Activated B cell treated with CpG ODN at 0.5 μM for 24 hours (primary cell): ENCODE measurements at regions of chr9 and their contacts with region 1.

Region 1: GRCh38 chr9:126985870-126986498 is 71.4 kb downstream of the RALGPS1 start:
- DNase-seq: peak; percentile 36
- ATAC-seq: peak; percentile 96
- H3K4me3 Mint-ChIP-seq: peak overlapping the region; percentile 66
- H3K27ac Mint-ChIP-seq: peak overlapping the region; percentile 59
- H3K4me1 Mint-ChIP-seq: peaks cover 33% of the 10 kb centered on the region
- H3K27me3 Mint-ChIP-seq: no peaks in the 10 kb centered on the region
- CTCF ChIP-seq: no peak

Region 2: GRCh38 chr9:127059765-127060361 is 73.9 kb after region 1 on chr9:
- CTCF ChIA-PET with region 1: no interaction called
- POLR2A ChIA-PET with region 1: no interaction called
- intact Hi-C with region 1: loop called (anchors 5 kb)
- DNase-seq: no peak
- ATAC-seq: peak; percentile 95
- H3K4me3 Mint-ChIP-seq: no peak overlapping the region
- H3K27ac Mint-ChIP-seq: no peak overlapping the region
- H3K4me1 Mint-ChIP-seq: peaks cover 25% of the 10 kb centered on the region
- H3K27me3 Mint-ChIP-seq: no peaks in the 10 kb centered on the region
- CTCF ChIP-seq: no peak